H1 (cell line): ENCODE measurements at regions of chr3 and their contacts with region 1.

Region 1: DNA sequence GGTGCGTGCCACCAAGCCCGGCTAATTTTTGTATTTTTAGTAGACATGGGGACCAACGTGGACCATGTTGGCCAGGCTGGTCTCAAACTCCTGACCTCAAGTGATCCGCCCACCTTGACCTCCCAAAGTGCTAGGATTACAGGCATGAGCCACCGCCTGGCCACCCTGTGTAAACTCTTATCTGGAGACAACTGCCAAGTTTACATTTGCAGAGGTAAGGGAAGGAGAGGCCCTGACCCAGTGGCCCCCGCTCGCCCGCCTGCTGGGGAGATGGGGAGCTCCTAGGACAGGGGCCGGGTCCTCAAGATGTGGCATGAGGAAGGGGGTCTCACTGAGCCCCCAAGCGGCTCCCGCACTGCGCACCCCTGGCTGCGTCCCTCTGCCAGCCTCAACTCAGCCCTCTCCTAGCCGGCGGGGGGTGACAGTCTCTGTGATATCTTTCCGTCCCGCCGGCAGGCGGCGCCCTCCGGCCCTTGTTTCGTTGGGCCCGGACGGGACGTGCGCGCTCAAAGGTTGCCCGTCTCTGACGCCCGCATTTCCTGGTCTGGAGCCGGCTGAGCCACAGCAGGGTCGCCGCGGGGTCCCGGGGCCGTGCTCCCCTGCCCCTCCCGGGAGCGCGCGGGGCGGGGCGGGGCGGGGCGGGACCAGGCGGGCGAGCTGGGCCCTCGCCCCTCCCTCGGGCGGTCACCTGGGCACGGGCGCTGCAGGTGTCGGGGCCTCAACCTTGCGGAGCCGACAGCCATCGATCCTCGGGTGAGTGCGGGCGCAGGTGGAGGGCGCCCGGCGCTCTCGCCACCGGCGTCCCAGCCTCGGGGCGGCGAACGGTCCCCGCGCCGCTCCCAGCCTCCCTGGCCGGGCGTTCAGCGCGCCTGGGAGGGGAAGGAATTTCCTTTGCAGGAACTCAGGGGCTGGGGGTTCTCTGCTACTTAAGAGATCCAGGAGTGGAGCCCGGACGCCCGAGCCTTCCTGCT is at the start of gene GPR160:
- DNase-seq: peak; percentile 54 to 97
- H3K4me3 ChIP-seq: peak within 1 kb of the TSS; percentile 54 to 81 (median 76)
- H3K27ac ChIP-seq: no peak within 1 kb of the TSS
- H3K4me1 ChIP-seq: peaks cover 0 to 7% (median 5%) of the 10 kb centered on the region in 4 experiments; a peak in 4 of 7 replicates
- H3K27me3 ChIP-seq: no peaks in the 10 kb centered on the region
- CTCF ChIP-seq: peak; percentile 78 to 85 (median 83)
- EP300 ChIP-seq: no peak
- POLR2A ChIP-seq: no peak
- RAD21 ChIP-seq: peak; percentile 39 to 68; a peak in 3 of 4 replicates
- total RNA-seq, gene GPR160: 16.6 and 16.7 TPM in 2 replicates

Region 2: GRCh38 chr3:170062769-170063168 is 25.0 kb after region 1 on chr3:
- CTCF ChIA-PET with region 1: interaction called, 14 read pairs
- POLR2A ChIA-PET with region 1: no interaction called
- DNase-seq: peak in 1 of 2 experiments; percentile 80
- H3K4me3 ChIP-seq: no peak overlapping the region
- H3K27ac ChIP-seq: no peak overlapping the region
- H3K4me1 ChIP-seq: peaks cover 4 to 15% (median 9%) of the 10 kb centered on the region in 4 experiments
- H3K27me3 ChIP-seq: no peaks in the 10 kb centered on the region
- CTCF ChIP-seq: peak; percentile 44 to 68 (median 50)
- EP300 ChIP-seq: no peak
- POLR2A ChIP-seq: no peak
- RAD21 ChIP-seq: peak; percentile 32 to 44; a peak in 3 of 4 replicates